PC-9 (cell line): ENCODE measurements at regions of chr3 and their contacts with region 1.

Region 1: DNA sequence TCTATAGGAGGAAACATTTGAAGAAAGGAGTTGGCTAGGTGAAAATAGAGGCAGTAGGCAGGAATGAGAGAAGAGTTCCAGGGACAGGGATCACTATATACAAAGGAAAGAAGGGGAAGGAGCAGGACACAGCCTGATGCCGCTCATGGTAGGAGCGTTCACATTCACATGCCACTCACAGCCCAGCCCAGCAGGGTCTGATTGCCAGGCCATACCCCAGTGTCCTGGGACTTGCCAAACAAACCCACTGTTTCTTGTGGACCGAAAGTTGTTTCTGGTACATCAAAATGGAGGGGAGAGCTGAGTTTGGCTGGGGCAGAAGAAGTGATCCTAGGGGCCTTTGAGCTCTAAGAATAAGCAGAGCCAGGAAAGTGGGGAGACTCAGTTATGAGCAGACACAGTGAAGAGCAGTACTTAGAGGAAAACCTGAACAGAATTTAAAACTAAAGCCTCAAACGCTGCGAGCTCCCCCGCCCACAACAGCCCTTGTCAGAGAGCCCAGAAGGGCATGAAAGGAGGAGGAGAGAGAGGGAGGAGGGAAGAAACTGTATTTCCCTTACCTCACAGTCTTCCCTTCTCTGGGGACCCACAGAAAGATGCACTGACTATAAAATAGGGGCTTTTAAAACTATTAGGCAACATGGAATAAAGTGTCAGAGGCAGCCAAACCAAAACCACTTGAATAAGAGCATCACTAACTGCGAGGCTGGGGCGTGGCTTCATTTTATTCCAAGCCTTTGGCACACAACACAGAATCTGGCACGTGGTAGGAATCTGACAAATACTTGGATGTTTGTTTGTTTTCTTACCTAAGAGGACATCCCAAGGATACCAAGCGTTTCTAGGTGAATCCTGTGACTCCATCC is 129.0 kb downstream of the RPL22L1 start:
- DNase-seq: peak; percentile 59 to 88
- H3K4me3 ChIP-seq: peak overlapping the region; percentile 6; the same call in 1 of the 2 replicates
- H3K27ac ChIP-seq: peak overlapping the region; percentile 81
- H3K4me1 ChIP-seq: peaks cover 72% of the 10 kb centered on the region
- H3K27me3 ChIP-seq: no peaks in the 10 kb centered on the region
- CTCF ChIP-seq: no peak

Region 2: GRCh38 chr3:170321321-170322034 is 419.5 kb before region 1 on chr3:
- CTCF ChIA-PET with region 1: no interaction called
- POLR2A ChIA-PET with region 1: no interaction called
- intact Hi-C with region 1: loop called (anchors 10 kb)
- DNase-seq: peak; percentile 63 to 84
- H3K4me3 ChIP-seq: no peak overlapping the region
- H3K27ac ChIP-seq: peak overlapping the region; percentile 52
- H3K4me1 ChIP-seq: peaks cover 35% of the 10 kb centered on the region
- H3K27me3 ChIP-seq: no peaks in the 10 kb centered on the region
- CTCF ChIP-seq: no peak

Region 3: DNA sequence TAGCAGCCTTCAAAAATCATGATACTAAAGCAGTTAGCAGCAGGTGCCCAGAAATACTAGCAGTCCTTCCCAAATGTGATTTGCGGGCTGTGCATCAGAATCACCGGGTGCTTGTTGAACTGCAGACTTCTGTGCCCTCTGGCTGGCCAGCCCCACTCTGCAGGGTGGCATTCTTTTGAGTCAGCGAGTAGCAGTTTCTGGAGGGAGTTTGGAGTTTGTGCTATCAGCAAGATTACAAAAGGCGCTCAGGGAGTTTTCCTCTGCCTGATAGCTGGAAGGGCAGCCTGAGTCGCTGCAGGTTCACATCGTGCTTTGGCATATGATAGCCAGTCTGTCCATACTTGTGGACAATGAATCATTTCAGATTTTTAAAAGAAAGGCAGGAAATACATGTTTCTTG is 264.7 kb before region 1 on chr3:
- CTCF ChIA-PET with region 1: no interaction called
- POLR2A ChIA-PET with region 1: no interaction called
- intact Hi-C with region 1: no loop called
- DNase-seq: peak; percentile 11 to 47
- H3K4me3 ChIP-seq: no peak overlapping the region
- H3K27ac ChIP-seq: no peak overlapping the region
- H3K4me1 ChIP-seq: peaks cover 11% of the 10 kb centered on the region; the same call in 1 of the 2 replicates
- H3K27me3 ChIP-seq: no peaks in the 10 kb centered on the region
- CTCF ChIP-seq: no peak

Region 4: GRCh38 chr3:170572665-170573253 is 168.2 kb before region 1 on chr3:
- CTCF ChIA-PET with region 1: no interaction called
- POLR2A ChIA-PET with region 1: no interaction called
- intact Hi-C with region 1: loop called (anchors 2 kb)
- DNase-seq: peak; percentile 19 to 75
- H3K4me3 ChIP-seq: no peak overlapping the region
- H3K27ac ChIP-seq: peak overlapping the region; percentile 37; the same call in 1 of the 2 replicates
- H3K4me1 ChIP-seq: peaks cover 13% of the 10 kb centered on the region
- H3K27me3 ChIP-seq: no peaks in the 10 kb centered on the region
- CTCF ChIP-seq: no peak

Region 5: GRCh38 chr3:170584585-170585007 is 156.4 kb before region 1 on chr3:
- CTCF ChIA-PET with region 1: no interaction called
- POLR2A ChIA-PET with region 1: no interaction called
- intact Hi-C with region 1: no loop called
- DNase-seq: peak in 1 of 2 experiments; percentile 64
- H3K4me3 ChIP-seq: no peak overlapping the region
- H3K27ac ChIP-seq: no peak overlapping the region
- H3K4me1 ChIP-seq: no peaks in the 10 kb centered on the region
- H3K27me3 ChIP-seq: 0 out of 2 replicates have a peak, but pooled peaks cover 4% of the 10 kb centered on the region
- CTCF ChIP-seq: no peak

Region 6: DNA sequence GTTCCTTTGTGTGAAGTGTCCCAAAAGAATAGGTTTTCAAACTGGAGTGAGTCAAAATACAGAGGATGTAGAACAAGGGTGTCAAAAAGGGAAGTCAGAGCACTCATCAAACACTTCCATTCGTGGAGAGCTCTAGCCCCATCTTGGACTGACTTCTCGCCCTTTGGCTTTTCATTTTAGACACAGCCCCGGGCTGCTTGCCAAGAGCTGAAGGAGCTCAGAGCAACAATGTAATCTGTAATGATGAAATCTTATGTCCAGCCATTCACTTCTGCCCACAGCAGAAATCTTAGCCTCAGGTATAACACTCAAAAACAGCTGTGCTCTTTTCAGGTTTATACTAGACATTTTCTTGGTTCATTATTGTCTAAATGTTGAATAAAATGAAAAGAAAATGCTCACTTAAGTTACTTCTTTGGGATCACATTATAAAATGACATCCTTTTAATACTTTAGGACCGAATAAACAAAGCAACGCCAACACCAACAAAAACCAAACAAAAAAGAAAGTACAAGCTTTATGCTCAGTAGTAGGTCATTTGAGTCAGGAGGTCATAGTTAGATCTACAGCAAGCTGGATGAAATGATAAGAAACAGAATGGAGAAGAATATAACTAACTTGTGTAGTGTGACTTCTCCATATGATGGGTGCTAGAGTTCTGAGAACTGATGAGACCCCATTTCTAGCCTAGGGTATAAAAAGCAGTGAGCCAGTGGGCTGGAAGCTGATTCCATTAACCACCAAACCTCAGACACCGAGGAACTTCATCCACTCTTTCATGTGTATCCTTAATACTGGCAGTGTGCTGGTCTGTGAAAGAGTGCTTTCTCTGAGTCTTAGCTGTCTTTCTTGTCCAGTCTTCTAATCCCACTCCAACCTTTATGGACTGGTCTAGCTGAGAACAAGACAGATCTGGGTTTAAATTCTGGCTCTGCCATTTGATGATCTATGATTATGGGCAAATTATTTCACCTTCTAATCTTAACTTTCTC is 23.3 kb before region 1 on chr3:
- CTCF ChIA-PET with region 1: interaction called, 4 read pairs
- POLR2A ChIA-PET with region 1: interaction called, 3 read pairs
- intact Hi-C with region 1: loop called (anchors 1 kb)
- DNase-seq: peak; percentile 60 to 63
- H3K4me3 ChIP-seq: no peak overlapping the region
- H3K27ac ChIP-seq: no peak overlapping the region
- H3K4me1 ChIP-seq: peaks cover 26% of the 10 kb centered on the region
- H3K27me3 ChIP-seq: no peaks in the 10 kb centered on the region
- CTCF ChIP-seq: no peak

Region 7: GRCh38 chr3:170726976-170727661 is 13.8 kb before region 1 on chr3:
- CTCF ChIA-PET with region 1: interaction called, 3 read pairs
- POLR2A ChIA-PET with region 1: interaction called, 3 read pairs
- intact Hi-C with region 1: loop called (anchors 2 kb)
- DNase-seq: peak; percentile 43 to 76
- H3K4me3 ChIP-seq: peak overlapping the region; percentile 19; the same call in 1 of the 2 replicates
- H3K27ac ChIP-seq: peak overlapping the region; percentile 81
- H3K4me1 ChIP-seq: peaks cover 27% of the 10 kb centered on the region
- H3K27me3 ChIP-seq: no peaks in the 10 kb centered on the region
- CTCF ChIP-seq: no peak

Region 8: GRCh38 chr3:170876537-170876936 is 135.6 kb after region 1 on chr3:
- CTCF ChIA-PET with region 1: no interaction called
- POLR2A ChIA-PET with region 1: no interaction called
- intact Hi-C with region 1: no loop called
- DNase-seq: no peak
- H3K4me3 ChIP-seq: no peak overlapping the region
- H3K27ac ChIP-seq: no peak overlapping the region
- H3K4me1 ChIP-seq: peaks cover 5% of the 10 kb centered on the region
- H3K27me3 ChIP-seq: no peaks in the 10 kb centered on the region
- CTCF ChIP-seq: no peak